ENCODE measurements at regions of chr15 and their contacts with region 1.

Region 1: GRCh38 chr15:80721476-80721875 is 26.4 kb downstream of the ABHD17C start:
- DNase-seq: no peak
- H3K4me3 ChIP-seq: no peak overlapping the region
- H3K27ac ChIP-seq: no peak overlapping the region
- H3K4me1 ChIP-seq: no peaks in the 10 kb centered on the region
- H3K27me3 ChIP-seq: no peaks in the 10 kb centered on the region
- CTCF ChIP-seq: no peak
- EP300 ChIP-seq: no peak
- POLR2A ChIP-seq: no peak

Region 2: GRCh38 chr15:79431636-79432344 is 1289.7 kb before region 1 on chr15 and contains the start of gene MINAR1:
- in situ Hi-C with region 1: no loop called
- intact Hi-C with region 1: loop called (anchors 5 kb)
- DNase-seq: no peak
- H3K4me3 ChIP-seq: peak within 1 kb of the TSS in 3 of 4 donors; percentile 9 to 50 (median 31)
- H3K27ac ChIP-seq: no peak within 1 kb of the TSS
- H3K4me1 ChIP-seq: peaks cover 0 to 17% (median 13%) of the 10 kb centered on the region in 4 donors
- H3K27me3 ChIP-seq: peaks cover 91% of the 10 kb centered on the region
- CTCF ChIP-seq: no peak
- EP300 ChIP-seq: no peak
- POLR2A ChIP-seq: no peak
- total RNA-seq, gene MINAR1: 0.14 to 1.1 (median 0.40) TPM in 3 of 4 donors, not detected in the other

Region 3: GRCh38 chr15:79989682-79990081 is 731.8 kb before region 1 on chr15:
- in situ Hi-C with region 1: no loop called
- intact Hi-C with region 1: no loop called
- DNase-seq: no peak
- H3K4me3 ChIP-seq: no peak overlapping the region
- H3K27ac ChIP-seq: no peak overlapping the region
- H3K4me1 ChIP-seq: peaks cover 0 to 4% (median 0%) of the 10 kb centered on the region in 4 donors
- H3K27me3 ChIP-seq: no peaks in the 10 kb centered on the region
- CTCF ChIP-seq: no peak
- EP300 ChIP-seq: no peak
- POLR2A ChIP-seq: no peak